ENCODE measurements at regions of chr13 and their contacts with region 1.

Region 1: DNA sequence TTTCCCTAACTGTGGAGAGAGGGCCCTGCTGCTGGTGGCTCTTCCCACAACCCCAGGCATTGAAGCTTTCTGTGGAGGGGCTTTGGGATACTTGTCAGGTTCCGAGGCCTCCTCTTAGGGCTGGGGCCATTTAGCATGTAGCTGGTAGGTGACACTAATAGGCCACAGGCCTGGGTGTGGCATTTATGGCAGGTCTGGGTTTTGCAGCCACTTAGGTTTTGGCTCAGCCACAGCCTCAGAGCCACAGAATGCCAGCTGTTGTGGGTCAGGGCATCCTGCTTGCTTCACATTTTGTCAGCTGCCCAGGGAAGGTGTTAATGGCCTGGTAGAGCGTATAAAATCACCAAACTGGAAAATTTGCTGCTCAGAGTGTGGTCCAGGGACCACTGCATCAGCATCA is 15.7 kb downstream of the FAM124A start:
- DNase-seq: no peak
- CTCF ChIP-seq: no peak

Region 2: DNA sequence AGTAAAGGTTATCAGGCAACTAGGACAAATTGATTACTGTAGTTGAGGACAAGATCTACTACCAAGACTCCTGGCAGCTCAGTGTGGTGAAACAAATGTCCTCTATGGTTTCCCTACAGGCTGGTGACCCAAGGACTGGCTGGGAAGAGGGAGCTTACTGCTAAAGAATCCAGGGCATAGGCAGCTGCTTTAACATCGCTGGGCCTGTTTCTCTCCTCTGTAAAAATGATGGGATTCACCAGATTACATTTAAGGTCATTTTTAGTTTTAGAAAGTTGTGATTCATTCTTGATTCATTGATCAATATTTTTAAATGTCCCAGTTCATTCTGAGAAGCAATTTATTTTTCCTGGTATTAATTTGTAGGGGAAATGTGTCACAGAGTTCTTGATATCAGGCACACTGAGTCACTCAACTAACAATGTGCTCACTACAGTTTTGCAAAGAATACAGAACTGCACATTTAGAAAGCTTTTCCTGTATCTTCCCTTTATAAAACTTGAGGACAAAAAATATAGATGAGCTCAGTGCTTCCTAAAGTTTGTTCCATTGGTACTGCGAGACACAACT is 35.3 kb before region 1 on chr13:
- CTCF ChIA-PET with region 1: no interaction called
- POLR2A ChIA-PET with region 1: no interaction called
- DNase-seq: no peak
- CTCF ChIP-seq: no peak

Region 3: DNA sequence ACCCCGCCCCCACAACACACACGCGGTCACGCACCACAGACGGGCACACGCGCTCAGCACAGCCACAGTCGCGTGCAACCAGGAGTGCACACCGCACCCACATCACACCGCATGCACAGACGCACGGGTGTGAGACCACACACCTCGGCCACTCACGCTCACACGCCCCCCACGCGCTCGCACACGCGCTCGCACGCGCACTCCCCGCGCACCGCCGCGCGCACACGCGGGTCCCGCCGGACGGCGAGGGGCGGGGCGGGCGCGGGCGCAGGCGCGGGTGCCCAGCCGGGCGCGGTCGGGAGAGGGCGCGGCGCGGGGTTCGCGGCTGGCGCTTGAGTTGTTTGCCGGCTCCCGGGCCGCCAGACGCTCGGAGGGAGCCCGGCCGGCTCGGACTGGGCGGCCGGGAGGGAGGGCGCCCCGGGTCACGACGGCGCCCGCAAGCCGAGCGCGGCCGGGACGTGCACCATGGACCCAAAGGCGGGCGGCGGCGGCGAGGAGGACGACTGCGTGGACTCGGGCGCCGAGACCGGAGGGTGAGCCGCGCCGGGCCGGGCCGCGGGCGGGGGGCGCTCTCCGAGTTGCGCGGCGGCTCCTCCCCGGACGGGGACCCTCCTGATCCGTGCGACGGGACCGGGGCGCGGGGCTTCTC is 15.7 kb before region 1 on chr13 and contains the start of gene FAM124A:
- CTCF ChIA-PET with region 1: interaction called, 12 read pairs
- POLR2A ChIA-PET with region 1: no interaction called
- DNase-seq: peak; percentile 63
- CTCF ChIP-seq: peak; percentile 53

Measured in GM10248 (cell line).